Activated CD4-positive, alpha-beta memory T cell treated with anti-CD3 and anti-CD28 coated beads for 36 hours (primary cell): ENCODE measurements at regions of chr17 and their contacts with region 1.

Region 1: DNA sequence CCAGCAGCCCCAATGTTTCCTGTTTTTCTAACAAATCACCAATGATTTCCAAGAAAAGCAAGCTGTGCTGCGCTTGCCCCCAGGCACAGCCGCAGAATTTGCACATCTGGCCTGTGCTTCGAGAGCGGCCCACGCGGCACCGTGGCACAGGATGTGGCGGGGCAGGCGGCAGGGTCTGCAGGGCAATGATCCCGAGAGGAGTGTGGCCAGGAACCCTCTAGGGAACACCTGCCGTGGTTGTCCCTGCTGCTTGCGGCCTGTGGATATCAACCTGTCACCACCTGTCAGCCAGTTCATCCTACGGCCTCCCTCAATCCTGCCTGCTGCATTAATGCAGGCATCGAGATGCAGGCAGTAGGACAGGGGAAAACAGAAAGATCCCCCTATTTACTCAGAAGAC is 24.0 kb downstream of the PIK3R5 start:
- DNase-seq: peak; percentile 85
- H3K4me3 Mint-ChIP-seq: peak overlapping the region; percentile 47
- H3K27ac Mint-ChIP-seq: peak overlapping the region; percentile 89
- H3K4me1 Mint-ChIP-seq: peaks cover 69% of the 10 kb centered on the region
- H3K27me3 Mint-ChIP-seq: no peaks in the 10 kb centered on the region

Region 2: DNA sequence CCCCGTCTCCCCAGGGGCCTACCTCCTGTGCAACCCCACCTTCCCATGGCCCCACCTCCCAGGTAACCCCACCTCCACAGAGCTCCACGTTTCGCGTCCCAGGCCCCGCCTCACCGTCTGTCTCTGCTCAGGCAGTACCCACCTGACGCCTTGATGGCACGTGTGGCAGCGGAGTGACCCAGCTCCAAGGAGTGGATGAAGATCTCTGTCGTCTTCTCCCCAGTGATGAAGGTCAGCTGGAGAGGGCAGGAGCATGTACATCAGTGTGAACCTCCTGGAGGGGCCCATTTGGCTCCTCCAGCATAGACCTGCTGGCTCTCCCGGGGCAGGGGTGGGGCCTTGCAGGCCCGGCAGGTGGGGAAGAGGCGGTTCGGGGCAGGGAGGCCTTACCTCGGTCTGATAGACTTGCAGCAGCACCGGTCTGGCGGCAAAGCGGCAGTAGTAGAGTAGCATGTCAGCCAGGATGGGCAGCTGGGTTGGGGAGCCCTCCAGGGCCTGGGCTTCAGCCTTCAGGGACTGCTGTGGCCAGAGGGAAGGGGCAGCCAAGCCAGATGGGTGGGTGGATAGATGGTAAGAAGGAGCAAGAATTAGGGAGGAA is 55.3 kb before region 1 on chr17:
- CTCF ChIA-PET with region 1: no interaction called
- POLR2A ChIA-PET with region 1: no interaction called
- intact Hi-C with region 1: no loop called
- DNase-seq: no peak
- H3K4me3 Mint-ChIP-seq: no peak overlapping the region
- H3K27ac Mint-ChIP-seq: peak overlapping the region; percentile 23
- H3K4me1 Mint-ChIP-seq: no peaks in the 10 kb centered on the region
- H3K27me3 Mint-ChIP-seq: no peaks in the 10 kb centered on the region

Region 3: GRCh38 chr17:8922451-8922850 is 19.1 kb before region 1 on chr17:
- CTCF ChIA-PET with region 1: interaction called, 3 read pairs
- POLR2A ChIA-PET with region 1: interaction called, 6 read pairs
- intact Hi-C with region 1: loop called (anchors 1 kb)
- DNase-seq: no peak
- H3K4me3 Mint-ChIP-seq: no peak overlapping the region
- H3K27ac Mint-ChIP-seq: peak overlapping the region; percentile 79
- H3K4me1 Mint-ChIP-seq: peaks cover 33% of the 10 kb centered on the region
- H3K27me3 Mint-ChIP-seq: no peaks in the 10 kb centered on the region

Region 4: GRCh38 chr17:8986290-8986689 is 44.8 kb after region 1 on chr17:
- CTCF ChIA-PET with region 1: no interaction called
- POLR2A ChIA-PET with region 1: no interaction called
- intact Hi-C with region 1: no loop called
- DNase-seq: no peak
- H3K4me3 Mint-ChIP-seq: no peak overlapping the region
- H3K27ac Mint-ChIP-seq: no peak overlapping the region
- H3K4me1 Mint-ChIP-seq: peaks cover 15% of the 10 kb centered on the region
- H3K27me3 Mint-ChIP-seq: peaks cover 3% of the 10 kb centered on the region